Endothelial cell of umbilical vein (primary cell): ENCODE measurements at regions of chr2 and their contacts with region 1.

Region 1: DNA sequence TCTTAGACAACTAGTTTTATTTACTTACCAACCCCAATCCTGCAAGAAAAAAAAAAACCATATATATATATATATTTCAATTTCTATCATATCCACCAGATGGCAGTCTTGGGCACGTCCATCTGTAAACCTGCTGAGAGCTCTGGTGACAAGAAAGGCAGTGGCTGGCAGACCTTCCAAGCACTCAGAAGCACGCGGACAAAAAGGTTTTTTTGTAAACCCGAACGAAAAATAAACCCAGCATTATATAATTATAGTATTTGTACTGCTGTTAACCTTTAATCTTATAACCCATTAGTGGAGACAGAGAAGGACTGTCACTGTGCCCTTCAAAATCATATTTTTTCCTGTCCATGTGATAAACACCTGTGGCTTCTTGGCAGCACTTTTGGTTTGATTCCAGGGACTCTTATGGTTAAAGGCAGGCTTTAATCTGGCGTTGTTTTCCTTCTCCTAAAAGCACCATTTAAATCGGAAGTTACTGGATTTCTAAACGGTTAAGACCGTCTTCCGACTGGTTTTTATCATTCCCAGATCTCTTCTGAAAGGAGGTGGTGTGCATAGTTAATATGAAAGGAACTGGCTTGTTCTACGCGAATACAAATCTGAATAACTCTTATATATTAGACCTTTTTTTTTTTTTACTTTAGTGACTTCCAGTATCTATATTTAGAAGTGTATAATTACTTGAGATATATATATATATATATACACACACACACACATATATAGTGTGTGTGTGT is 31.0 kb upstream of the SLC3A1 start:
- DNase-seq: peak; percentile 86
- H3K4me3 ChIP-seq: peak overlapping the region; percentile 3 to 59 (median 25)
- H3K27ac ChIP-seq: no peak overlapping the region
- H3K4me1 ChIP-seq: no peaks in the 10 kb centered on the region
- H3K27me3 ChIP-seq: peaks cover 2 to 7% of the 10 kb centered on the region in 2 experiments
- CTCF ChIP-seq: peak; percentile 36 to 46
- POLR2A ChIP-seq: no peak

Region 2: GRCh38 chr2:43774617-43775016 is 469.7 kb before region 1 on chr2:
- CTCF ChIA-PET with region 1: no interaction called
- POLR2A ChIA-PET with region 1: no interaction called
- dilution Hi-C with region 1: no loop called
- intact Hi-C with region 1: no loop called
- DNase-seq: no peak
- H3K4me3 ChIP-seq: peak overlapping the region; percentile 70 to 92 (median 81)
- H3K27ac ChIP-seq: peak overlapping the region; percentile 79
- H3K4me1 ChIP-seq: peaks cover 6% of the 10 kb centered on the region
- H3K27me3 ChIP-seq: peaks cover 0 to 2% of the 10 kb centered on the region in 2 experiments
- CTCF ChIP-seq: no peak
- POLR2A ChIP-seq: no peak

Region 3: GRCh38 chr2:44044281-44044720 is 200.0 kb before region 1 on chr2:
- CTCF ChIA-PET with region 1: interaction called, 19 read pairs
- POLR2A ChIA-PET with region 1: no interaction called
- dilution Hi-C with region 1: no loop called
- intact Hi-C with region 1: loop called (anchors 1 kb)
- DNase-seq: peak; percentile 78
- H3K4me3 ChIP-seq: no peak overlapping the region
- H3K27ac ChIP-seq: no peak overlapping the region
- H3K4me1 ChIP-seq: no peaks in the 10 kb centered on the region
- H3K27me3 ChIP-seq: peaks cover 4 to 5% of the 10 kb centered on the region in 2 experiments
- CTCF ChIP-seq: peak; percentile 87 to 95
- POLR2A ChIP-seq: no peak

Region 4: GRCh38 chr2:44087036-44087713 is 157.1 kb before region 1 on chr2:
- CTCF ChIA-PET with region 1: interaction called, 3 read pairs
- POLR2A ChIA-PET with region 1: no interaction called
- dilution Hi-C with region 1: no loop called
- intact Hi-C with region 1: loop called (anchors 1 kb)
- DNase-seq: peak; percentile 85
- H3K4me3 ChIP-seq: peak overlapping the region in 2 of 3 experiments; percentile 15 to 45
- H3K27ac ChIP-seq: no peak overlapping the region
- H3K4me1 ChIP-seq: peaks cover 4% of the 10 kb centered on the region
- H3K27me3 ChIP-seq: peaks cover 19 to 27% of the 10 kb centered on the region in 2 experiments
- CTCF ChIP-seq: peak; percentile 92 to 95
- POLR2A ChIP-seq: no peak

Region 5: DNA sequence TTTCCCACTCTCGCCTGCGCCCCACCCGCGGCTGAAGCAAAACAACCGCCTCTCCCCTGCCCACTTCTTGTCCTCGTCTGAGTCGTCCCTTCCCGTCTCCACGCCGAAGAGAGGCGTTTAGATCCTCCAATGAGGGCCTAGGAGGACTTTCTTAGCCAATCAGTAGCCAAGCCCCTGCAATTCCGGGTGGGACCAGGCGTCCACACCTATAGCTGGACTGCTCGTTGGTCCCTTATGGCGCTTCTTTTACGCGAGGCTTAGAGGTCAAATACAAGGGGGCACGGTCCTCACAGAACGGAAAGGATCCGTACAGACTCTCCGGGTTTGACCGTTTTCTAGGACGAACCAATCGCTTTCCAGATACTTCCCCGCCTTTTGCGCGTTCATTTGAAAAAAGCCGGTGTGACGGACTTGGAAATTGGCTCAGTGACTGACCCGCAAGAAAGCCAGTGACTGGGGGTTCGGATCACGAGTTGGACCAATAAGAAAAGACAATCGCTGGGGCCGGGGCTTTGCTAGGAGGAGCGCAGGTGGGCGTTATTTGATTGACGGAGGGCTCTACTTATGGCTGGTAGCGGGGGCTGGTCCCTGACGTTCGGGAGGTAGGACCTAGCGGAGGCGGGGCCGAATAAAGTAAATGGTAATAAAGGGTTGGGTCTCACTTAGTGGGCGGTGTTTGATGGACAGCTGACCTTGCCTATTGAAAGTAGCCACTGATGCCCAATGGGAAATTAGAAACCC is 76.2 kb before region 1 on chr2:
- CTCF ChIA-PET with region 1: interaction called, 3 read pairs
- POLR2A ChIA-PET with region 1: no interaction called
- dilution Hi-C with region 1: no loop called
- intact Hi-C with region 1: loop called (anchors 2 kb)
- DNase-seq: peak; percentile 100
- H3K4me3 ChIP-seq: peak overlapping the region; percentile 38 to 82 (median 71)
- H3K27ac ChIP-seq: peak overlapping the region; percentile 97
- H3K4me1 ChIP-seq: peaks cover 15% of the 10 kb centered on the region
- H3K27me3 ChIP-seq: peaks cover 0 to 5% of the 10 kb centered on the region in 2 experiments
- CTCF ChIP-seq: no peak
- POLR2A ChIP-seq: no peak

Region 6: DNA sequence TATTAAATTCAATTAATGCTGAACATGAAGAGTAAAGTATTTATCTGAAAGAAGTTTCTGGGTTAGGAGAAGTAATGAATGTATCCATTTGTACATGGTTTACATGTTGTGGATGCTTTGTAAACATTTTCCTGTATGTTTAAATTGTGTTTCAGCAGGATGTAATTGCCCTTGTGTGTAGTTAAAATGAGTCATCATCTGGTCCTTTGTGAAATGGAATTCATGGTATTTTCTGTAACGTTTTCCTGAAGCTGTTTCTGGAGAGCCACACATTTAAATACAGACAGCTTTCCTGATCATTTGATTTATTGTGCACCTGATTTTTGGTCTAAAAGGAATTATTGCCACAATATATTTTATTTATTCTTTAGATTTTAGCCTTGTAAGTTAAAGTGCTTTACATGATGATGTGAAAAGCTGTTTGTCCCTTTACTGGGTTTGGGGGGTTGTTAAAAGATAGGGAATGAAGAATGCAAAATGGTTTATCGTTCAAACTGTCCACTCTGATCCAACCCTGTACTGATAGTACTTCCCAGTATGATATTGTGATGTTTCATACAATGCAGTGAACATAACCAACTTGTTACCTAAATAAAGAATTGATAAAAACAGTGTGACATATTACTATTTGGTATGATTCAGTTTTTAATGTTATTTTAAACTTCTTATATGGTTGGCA is 10.7 kb before region 1 on chr2:
- CTCF ChIA-PET with region 1: interaction called, 18 read pairs
- POLR2A ChIA-PET with region 1: no interaction called
- dilution Hi-C with region 1: no loop called
- intact Hi-C with region 1: no loop called
- DNase-seq: peak; percentile 82
- H3K4me3 ChIP-seq: no peak overlapping the region
- H3K27ac ChIP-seq: peak overlapping the region; percentile 35
- H3K4me1 ChIP-seq: peaks cover 21% of the 10 kb centered on the region
- H3K27me3 ChIP-seq: no peaks in the 10 kb centered on the region
- CTCF ChIP-seq: no peak
- POLR2A ChIP-seq: no peak

Region 7: GRCh38 chr2:44291281-44292248 is 47.3 kb after region 1 on chr2:
- CTCF ChIA-PET with region 1: interaction called, 13 read pairs
- POLR2A ChIA-PET with region 1: no interaction called
- dilution Hi-C with region 1: no loop called
- intact Hi-C with region 1: loop called (anchors 1 kb)
- DNase-seq: peak; percentile 67
- H3K4me3 ChIP-seq: no peak overlapping the region
- H3K27ac ChIP-seq: no peak overlapping the region
- H3K4me1 ChIP-seq: peaks cover 6% of the 10 kb centered on the region
- H3K27me3 ChIP-seq: no peaks in the 10 kb centered on the region
- CTCF ChIP-seq: peak; percentile 35 to 48
- POLR2A ChIP-seq: no peak

Region 8: GRCh38 chr2:44342854-44343253 is 98.6 kb after region 1 on chr2:
- CTCF ChIA-PET with region 1: interaction called, 7 read pairs
- POLR2A ChIA-PET with region 1: no interaction called
- dilution Hi-C with region 1: no loop called
- intact Hi-C with region 1: loop called (anchors 2 kb)
- DNase-seq: peak; percentile 20
- H3K4me3 ChIP-seq: no peak overlapping the region
- H3K27ac ChIP-seq: no peak overlapping the region
- H3K4me1 ChIP-seq: no peaks in the 10 kb centered on the region
- H3K27me3 ChIP-seq: no peaks in the 10 kb centered on the region
- CTCF ChIP-seq: no peak
- POLR2A ChIP-seq: no peak

Region 9: GRCh38 chr2:44560352-44560751 is 316.1 kb after region 1 on chr2:
- CTCF ChIA-PET with region 1: no interaction called
- POLR2A ChIA-PET with region 1: no interaction called
- dilution Hi-C with region 1: no loop called
- intact Hi-C with region 1: no loop called
- DNase-seq: peak; percentile 19
- H3K4me3 ChIP-seq: no peak overlapping the region
- H3K27ac ChIP-seq: no peak overlapping the region
- H3K4me1 ChIP-seq: peaks cover 6% of the 10 kb centered on the region
- H3K27me3 ChIP-seq: no peaks in the 10 kb centered on the region
- CTCF ChIP-seq: peak; percentile 26 to 30
- POLR2A ChIP-seq: no peak